ENCODE measurements at regions of chr6 and their contacts with region 1.

Region 1: DNA sequence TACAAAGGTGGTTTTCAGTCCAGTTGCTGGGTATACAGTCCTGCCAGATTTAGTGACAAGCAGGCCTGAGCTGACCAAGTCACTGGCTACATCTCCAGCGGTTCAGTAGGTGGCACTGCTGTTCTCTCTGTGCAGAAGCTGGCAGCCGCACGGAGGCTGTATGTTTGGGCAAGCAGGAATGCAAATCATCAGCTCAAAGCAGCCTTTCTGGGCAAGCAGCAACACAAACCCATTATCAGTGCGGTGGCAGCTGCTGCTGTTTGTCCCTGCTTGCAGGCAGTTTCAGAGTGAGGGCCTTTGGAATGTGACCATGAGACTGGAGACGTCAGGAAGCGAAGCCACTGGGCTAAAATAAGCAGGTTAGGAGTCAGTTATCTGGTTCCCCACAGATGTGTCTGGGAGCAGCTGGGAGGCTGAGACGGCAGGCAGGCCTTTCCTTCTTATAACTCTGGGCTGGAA is 72.5 kb downstream of the TXLNB start:
- DNase-seq: peak; percentile 40 to 84 (median 73)
- ATAC-seq: peak; percentile 96
- H3K4me3 ChIP-seq: no peak overlapping the region
- H3K4me3 Mint-ChIP-seq: no peak overlapping the region
- H3K27ac ChIP-seq: no peak overlapping the region
- H3K27ac Mint-ChIP-seq: peak overlapping the region; percentile 82
- H3K4me1 ChIP-seq: peaks cover 11% of the 10 kb centered on the region
- H3K4me1 Mint-ChIP-seq: peaks cover 13% of the 10 kb centered on the region
- H3K27me3 ChIP-seq: no peaks in the 10 kb centered on the region
- H3K27me3 Mint-ChIP-seq: no peaks in the 10 kb centered on the region
- CTCF ChIP-seq: peak; percentile 66

Region 2: GRCh38 chr6:137783710-137784109 is 1435.6 kb before region 1 on chr6:
- CTCF ChIA-PET with region 1: no interaction called
- POLR2A ChIA-PET with region 1: no interaction called
- intact Hi-C with region 1: no loop called
- DNase-seq: no peak
- ATAC-seq: no peak
- H3K4me3 ChIP-seq: no peak overlapping the region
- H3K4me3 Mint-ChIP-seq: no peak overlapping the region
- H3K27ac ChIP-seq: no peak overlapping the region
- H3K27ac Mint-ChIP-seq: no peak overlapping the region
- H3K4me1 ChIP-seq: no peaks in the 10 kb centered on the region
- H3K4me1 Mint-ChIP-seq: no peaks in the 10 kb centered on the region
- H3K27me3 ChIP-seq: no peaks in the 10 kb centered on the region
- H3K27me3 Mint-ChIP-seq: no peaks in the 10 kb centered on the region
- CTCF ChIP-seq: no peak

Region 3: GRCh38 chr6:138817822-138818308 is 401.4 kb before region 1 on chr6:
- CTCF ChIA-PET with region 1: interaction called, 12 read pairs
- POLR2A ChIA-PET with region 1: no interaction called
- intact Hi-C with region 1: loop called (anchors 5 to 10 kb)
- DNase-seq: no peak
- ATAC-seq: no peak
- H3K4me3 ChIP-seq: no peak overlapping the region
- H3K4me3 Mint-ChIP-seq: no peak overlapping the region
- H3K27ac ChIP-seq: no peak overlapping the region
- H3K27ac Mint-ChIP-seq: no peak overlapping the region
- H3K4me1 ChIP-seq: no peaks in the 10 kb centered on the region
- H3K4me1 Mint-ChIP-seq: no peaks in the 10 kb centered on the region
- H3K27me3 ChIP-seq: no peaks in the 10 kb centered on the region
- H3K27me3 Mint-ChIP-seq: no peaks in the 10 kb centered on the region
- CTCF ChIP-seq: no peak

Region 4: GRCh38 chr6:139124887-139125672 is 94.2 kb before region 1 on chr6:
- CTCF ChIA-PET with region 1: interaction called, 41 read pairs
- POLR2A ChIA-PET with region 1: interaction called, 6 read pairs
- intact Hi-C with region 1: loop called in 1 of 2 experiments (anchors 1 kb)
- DNase-seq: peak; percentile 55 to 93 (median 82)
- ATAC-seq: peak; percentile 95
- H3K4me3 ChIP-seq: peak overlapping the region; percentile 9 to 24
- H3K4me3 Mint-ChIP-seq: peak overlapping the region; percentile 59
- H3K27ac ChIP-seq: peak overlapping the region; percentile 42 to 71
- H3K27ac Mint-ChIP-seq: peak overlapping the region; percentile 93
- H3K4me1 ChIP-seq: peaks cover 30% of the 10 kb centered on the region
- H3K4me1 Mint-ChIP-seq: peaks cover 58% of the 10 kb centered on the region
- H3K27me3 ChIP-seq: no peaks in the 10 kb centered on the region
- H3K27me3 Mint-ChIP-seq: no peaks in the 10 kb centered on the region
- CTCF ChIP-seq: peak; percentile 86

Region 5: GRCh38 chr6:139230391-139230840 is 11.1 kb after region 1 on chr6:
- CTCF ChIA-PET with region 1: interaction called, 11 read pairs
- POLR2A ChIA-PET with region 1: no interaction called
- intact Hi-C with region 1: no loop called
- DNase-seq: peak in 2 of 9 experiments; percentile 17 to 27
- ATAC-seq: no peak
- H3K4me3 ChIP-seq: no peak overlapping the region
- H3K4me3 Mint-ChIP-seq: no peak overlapping the region
- H3K27ac ChIP-seq: no peak overlapping the region
- H3K27ac Mint-ChIP-seq: peak overlapping the region; percentile 10
- H3K4me1 ChIP-seq: no peaks in the 10 kb centered on the region
- H3K4me1 Mint-ChIP-seq: peaks cover 9% of the 10 kb centered on the region
- H3K27me3 ChIP-seq: no peaks in the 10 kb centered on the region
- H3K27me3 Mint-ChIP-seq: no peaks in the 10 kb centered on the region
- CTCF ChIP-seq: no peak

Region 6: DNA sequence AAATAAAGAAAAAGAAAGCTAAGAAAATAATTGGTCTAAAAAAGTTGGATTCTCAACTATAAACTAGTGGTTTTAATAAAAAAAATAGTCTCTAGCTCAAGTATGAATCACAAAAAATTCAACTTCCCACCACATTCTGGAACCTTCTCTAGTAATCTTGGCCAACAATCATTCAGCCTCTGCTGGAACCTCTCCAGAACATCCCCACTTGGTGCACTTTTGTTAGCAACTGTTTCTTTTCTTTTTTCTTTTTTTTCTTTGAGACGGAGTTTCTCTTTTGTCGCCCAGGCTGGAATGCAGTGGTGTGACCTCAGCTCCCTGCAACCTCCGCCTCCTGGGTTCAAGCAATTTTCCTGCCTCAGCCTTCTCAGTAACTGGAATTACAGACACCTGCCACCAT is 36.8 kb after region 1 on chr6:
- CTCF ChIA-PET with region 1: interaction called, 13 read pairs
- POLR2A ChIA-PET with region 1: no interaction called
- intact Hi-C with region 1: loop called in 1 of 2 experiments (anchors 5 kb)
- DNase-seq: no peak
- ATAC-seq: no peak
- H3K4me3 ChIP-seq: no peak overlapping the region
- H3K4me3 Mint-ChIP-seq: no peak overlapping the region
- H3K27ac ChIP-seq: no peak overlapping the region
- H3K27ac Mint-ChIP-seq: no peak overlapping the region
- H3K4me1 ChIP-seq: no peaks in the 10 kb centered on the region
- H3K4me1 Mint-ChIP-seq: peaks cover 25% of the 10 kb centered on the region
- H3K27me3 ChIP-seq: no peaks in the 10 kb centered on the region
- H3K27me3 Mint-ChIP-seq: no peaks in the 10 kb centered on the region
- CTCF ChIP-seq: no peak

Region 7: DNA sequence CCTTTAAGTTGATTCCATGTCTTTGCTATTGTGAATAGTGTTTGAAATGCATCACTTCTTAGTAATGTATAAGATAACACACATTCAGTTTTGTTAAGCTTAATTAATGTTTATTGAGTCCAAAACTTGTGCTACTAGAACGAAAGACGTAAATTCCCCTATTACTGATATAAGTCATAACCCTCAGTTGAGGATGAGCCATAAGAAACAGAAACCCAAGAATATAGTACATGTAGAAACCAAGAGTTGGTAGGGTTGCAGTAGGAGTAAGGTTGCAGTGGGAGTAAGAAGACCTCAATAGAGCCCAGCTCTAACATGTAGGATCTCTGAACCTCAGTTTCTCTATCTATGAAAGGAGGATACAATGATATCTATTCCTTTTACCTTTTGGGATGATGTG is 135.9 kb after region 1 on chr6:
- CTCF ChIA-PET with region 1: interaction called, 64 read pairs
- POLR2A ChIA-PET with region 1: no interaction called
- intact Hi-C with region 1: no loop called
- DNase-seq: no peak
- ATAC-seq: no peak
- H3K4me3 ChIP-seq: no peak overlapping the region
- H3K4me3 Mint-ChIP-seq: no peak overlapping the region
- H3K27ac ChIP-seq: no peak overlapping the region
- H3K27ac Mint-ChIP-seq: no peak overlapping the region
- H3K4me1 ChIP-seq: no peaks in the 10 kb centered on the region
- H3K4me1 Mint-ChIP-seq: no peaks in the 10 kb centered on the region
- H3K27me3 ChIP-seq: no peaks in the 10 kb centered on the region
- H3K27me3 Mint-ChIP-seq: no peaks in the 10 kb centered on the region
- CTCF ChIP-seq: no peak

Region 8: DNA sequence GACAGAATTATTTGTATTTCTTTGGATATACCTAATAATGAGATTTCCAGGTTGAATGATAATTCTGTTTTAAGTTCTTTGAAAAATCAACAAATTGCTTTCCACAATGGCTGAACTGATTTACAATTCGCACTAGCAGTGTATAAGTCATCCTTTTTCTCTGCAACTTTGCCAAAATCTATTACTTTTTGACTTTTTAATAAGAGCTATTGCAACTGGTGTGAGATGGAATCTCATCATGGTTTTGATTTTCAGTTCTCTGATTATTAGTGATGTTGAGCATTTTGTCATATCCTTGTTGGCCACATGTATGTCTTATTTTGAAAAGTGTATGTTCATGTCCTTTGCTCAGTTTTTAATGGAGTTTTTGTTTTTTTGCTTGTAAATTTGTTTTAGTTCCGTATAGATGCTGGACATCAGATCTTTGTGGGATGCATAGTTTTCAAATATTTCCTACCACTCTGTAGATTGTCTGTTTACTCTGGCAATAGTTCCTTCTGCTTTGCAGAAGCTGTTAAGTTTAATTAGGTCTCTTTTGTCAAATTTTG is 565.0 kb after region 1 on chr6:
- CTCF ChIA-PET with region 1: no interaction called
- POLR2A ChIA-PET with region 1: no interaction called
- intact Hi-C with region 1: no loop called
- DNase-seq: no peak
- ATAC-seq: no peak
- H3K4me3 ChIP-seq: no peak overlapping the region
- H3K4me3 Mint-ChIP-seq: no peak overlapping the region
- H3K27ac ChIP-seq: no peak overlapping the region
- H3K27ac Mint-ChIP-seq: no peak overlapping the region
- H3K4me1 ChIP-seq: no peaks in the 10 kb centered on the region
- H3K4me1 Mint-ChIP-seq: no peaks in the 10 kb centered on the region
- H3K27me3 ChIP-seq: no peaks in the 10 kb centered on the region
- H3K27me3 Mint-ChIP-seq: peaks cover 3% of the 10 kb centered on the region
- CTCF ChIP-seq: no peak

Measured in CD8-positive, alpha-beta T cell (primary cell).